Stomach (tissue), 19 donors: ENCODE measurements at regions of chr18 and their contacts with region 1.

Region 1: GRCh38 chr18:27778441-27778840 is 398.5 kb downstream of the CDH2 start:
- DNase-seq: peak in 1 of 2 donors; percentile 11
- H3K4me3 ChIP-seq: no peak overlapping the region
- H3K27ac ChIP-seq: no peak overlapping the region
- H3K4me1 ChIP-seq: no peaks in the 10 kb centered on the region
- H3K27me3 ChIP-seq: no peaks in the 10 kb centered on the region
- CTCF ChIP-seq: peak in 3 of 7 experiments; percentile 20 to 46 (median 21)
- EP300 ChIP-seq: no peak
- POLR2A ChIP-seq: no peak

Region 2: DNA sequence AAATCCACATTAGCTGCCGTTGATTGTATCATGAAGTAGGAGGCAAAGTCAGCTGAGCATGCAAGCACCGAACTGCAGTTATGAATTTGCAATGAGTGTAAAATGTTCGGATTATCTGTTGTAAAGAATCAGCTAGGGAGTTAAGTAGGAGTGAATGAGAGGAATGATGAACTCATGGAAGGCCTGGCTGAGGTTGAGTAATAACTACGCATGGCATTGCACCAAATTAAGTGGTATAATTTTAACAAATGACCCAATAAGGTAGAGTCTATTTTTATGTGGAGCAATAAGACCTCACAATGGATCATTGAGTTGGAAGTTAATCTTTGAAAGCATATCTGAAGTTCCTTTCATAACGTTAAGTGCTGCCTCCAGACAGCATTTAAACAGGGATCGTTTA is 305.1 kb before region 1 on chr18:
- intact Hi-C with region 1: no loop called
- DNase-seq: peak in 1 of 2 donors; percentile 5
- H3K4me3 ChIP-seq: no peak overlapping the region
- H3K27ac ChIP-seq: no peak overlapping the region
- H3K4me1 ChIP-seq: no peaks in the 10 kb centered on the region
- H3K27me3 ChIP-seq: no peaks in the 10 kb centered on the region
- CTCF ChIP-seq: no peak
- EP300 ChIP-seq: no peak
- POLR2A ChIP-seq: no peak

Region 3: GRCh38 chr18:27921904-27922739 is 143.7 kb after region 1 on chr18:
- intact Hi-C with region 1: no loop called
- DNase-seq: peak in 1 of 2 donors; percentile 48
- H3K4me3 ChIP-seq: peak overlapping the region in 2 of 4 donors; percentile 23 to 31
- H3K27ac ChIP-seq: no peak overlapping the region
- H3K4me1 ChIP-seq: peaks cover 0 to 8% (median 0%) of the 10 kb centered on the region in 4 donors
- H3K27me3 ChIP-seq: no peaks in the 10 kb centered on the region
- CTCF ChIP-seq: no peak
- EP300 ChIP-seq: no peak
- POLR2A ChIP-seq: no peak

Region 4: DNA sequence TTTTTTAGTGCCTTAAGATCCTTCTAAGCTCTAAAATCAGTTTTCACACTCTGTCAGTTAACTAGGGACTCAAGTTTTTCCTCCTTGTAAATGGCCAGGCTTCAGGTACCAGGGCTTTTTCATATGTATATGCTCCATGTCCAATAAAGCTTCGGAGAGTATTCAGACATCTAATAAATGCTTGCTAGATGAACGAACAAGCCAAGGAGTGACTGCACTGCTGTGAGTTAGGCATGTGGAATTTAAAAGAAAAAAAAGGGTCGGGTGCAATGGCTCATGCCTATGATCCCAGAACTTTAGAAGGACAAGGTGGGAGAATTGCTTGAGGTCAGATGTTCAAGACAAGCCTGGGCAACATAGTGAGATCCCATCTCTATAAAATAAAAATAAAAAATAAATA is 316.6 kb after region 1 on chr18:
- intact Hi-C with region 1: no loop called
- DNase-seq: no peak
- H3K4me3 ChIP-seq: no peak overlapping the region
- H3K27ac ChIP-seq: no peak overlapping the region
- H3K4me1 ChIP-seq: peaks cover 0 to 5% (median 4%) of the 10 kb centered on the region in 4 donors
- H3K27me3 ChIP-seq: no peaks in the 10 kb centered on the region
- CTCF ChIP-seq: no peak
- EP300 ChIP-seq: no peak
- POLR2A ChIP-seq: no peak

Region 5: GRCh38 chr18:28189400-28190239 is 411.2 kb after region 1 on chr18:
- intact Hi-C with region 1: loop called (anchors 10 kb)
- DNase-seq: peak; percentile 29 to 58
- H3K4me3 ChIP-seq: no peak overlapping the region
- H3K27ac ChIP-seq: no peak overlapping the region
- H3K4me1 ChIP-seq: no peaks in the 10 kb centered on the region
- H3K27me3 ChIP-seq: no peaks in the 10 kb centered on the region
- CTCF ChIP-seq: peak in 5 of 7 experiments; percentile 29 to 53 (median 46)
- EP300 ChIP-seq: no peak
- POLR2A ChIP-seq: no peak